GM10248 (cell line): ENCODE measurements at regions of chr2 and their contacts with region 1.

Region 1: GRCh38 chr2:121907928-121908327 is 152.5 kb downstream of the TSN start:
- DNase-seq: no peak
- CTCF ChIP-seq: no peak

Region 2: DNA sequence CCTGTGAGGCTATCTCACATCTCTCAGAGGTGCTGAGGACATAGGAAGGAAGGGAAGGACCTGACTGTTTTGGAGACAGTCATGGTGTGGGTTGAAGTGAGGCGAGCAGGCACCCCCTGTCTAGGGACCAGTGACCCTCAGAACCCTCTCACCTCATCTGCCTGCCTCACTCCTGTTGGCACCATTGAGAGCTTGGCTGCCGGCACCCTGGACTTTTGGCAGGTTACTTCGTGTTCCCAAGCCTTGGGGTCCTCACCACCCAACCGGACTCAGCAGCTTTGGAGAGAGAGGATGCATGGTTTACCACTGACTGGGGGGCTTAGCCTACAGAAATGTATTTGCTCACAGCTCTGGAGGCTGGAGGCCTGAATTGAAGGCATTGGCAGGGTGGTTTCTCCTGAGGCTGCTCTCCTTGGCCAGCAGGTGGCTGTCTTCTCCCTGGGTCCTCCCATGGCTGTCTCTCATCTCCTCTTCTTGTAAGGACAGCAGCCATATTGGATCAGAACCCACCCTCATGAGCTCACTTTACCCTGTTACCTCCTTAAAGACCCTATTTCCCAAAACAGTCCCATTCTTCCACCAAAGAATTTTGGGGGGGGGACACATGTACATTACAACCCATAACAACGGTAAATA is 10.5 kb before region 1 on chr2:
- CTCF ChIA-PET with region 1: interaction called, 16 read pairs
- POLR2A ChIA-PET with region 1: no interaction called
- DNase-seq: peak; percentile 61
- CTCF ChIP-seq: peak; percentile 64

Region 3: GRCh38 chr2:121918231-121918630 is 10.3 kb after region 1 on chr2:
- CTCF ChIA-PET with region 1: interaction called, 10 read pairs
- POLR2A ChIA-PET with region 1: no interaction called
- DNase-seq: no peak
- CTCF ChIP-seq: no peak